Cardiac septum (tissue), 1 donor: ENCODE measurements at regions of chr15 and their contacts with region 1.

Region 1: GRCh38 chr15:31435261-31435911 is 108.8 kb downstream of the KLF13 start:
- DNase-seq: peak; percentile 91

Region 2: DNA sequence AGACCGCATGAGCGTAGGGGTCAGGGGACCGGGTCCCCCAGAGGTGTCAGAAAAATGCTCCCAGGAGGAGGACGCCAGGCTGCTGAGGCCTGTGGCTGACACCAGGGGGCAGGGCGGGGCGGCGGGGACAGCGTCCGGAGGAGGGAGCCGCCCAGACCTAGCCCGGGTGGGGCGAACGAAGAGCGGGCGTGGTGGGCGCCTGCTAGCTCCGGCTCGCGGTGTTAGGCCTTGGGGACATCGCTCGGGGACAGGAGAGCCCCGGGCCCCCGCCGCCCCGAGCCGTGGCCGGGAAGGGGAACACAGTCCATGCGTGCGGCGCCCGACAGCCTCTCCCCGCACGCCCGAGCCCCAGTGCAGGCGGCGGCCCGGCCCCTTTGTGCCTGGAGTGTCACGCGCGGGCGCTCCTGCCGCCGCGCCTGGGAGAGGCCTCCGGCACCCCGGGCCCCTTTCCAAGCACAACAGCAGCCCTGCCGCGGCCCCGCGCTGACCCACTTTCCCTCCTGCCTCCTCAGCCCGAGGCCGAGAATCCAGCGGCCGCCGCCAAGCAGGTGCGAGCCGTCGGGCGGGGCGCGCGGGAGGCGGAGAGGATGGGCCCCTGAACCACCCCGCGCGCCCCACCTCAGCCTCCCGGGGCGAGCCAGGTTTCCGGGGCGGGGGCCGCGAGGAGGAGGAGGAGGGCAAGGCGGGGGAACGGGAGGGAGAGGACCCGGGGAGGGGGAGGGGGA is 219.7 kb before region 1 on chr15:
- intact Hi-C with region 1: loop called (anchors 5 kb)
- DNase-seq: peak; percentile 95

Region 3: DNA sequence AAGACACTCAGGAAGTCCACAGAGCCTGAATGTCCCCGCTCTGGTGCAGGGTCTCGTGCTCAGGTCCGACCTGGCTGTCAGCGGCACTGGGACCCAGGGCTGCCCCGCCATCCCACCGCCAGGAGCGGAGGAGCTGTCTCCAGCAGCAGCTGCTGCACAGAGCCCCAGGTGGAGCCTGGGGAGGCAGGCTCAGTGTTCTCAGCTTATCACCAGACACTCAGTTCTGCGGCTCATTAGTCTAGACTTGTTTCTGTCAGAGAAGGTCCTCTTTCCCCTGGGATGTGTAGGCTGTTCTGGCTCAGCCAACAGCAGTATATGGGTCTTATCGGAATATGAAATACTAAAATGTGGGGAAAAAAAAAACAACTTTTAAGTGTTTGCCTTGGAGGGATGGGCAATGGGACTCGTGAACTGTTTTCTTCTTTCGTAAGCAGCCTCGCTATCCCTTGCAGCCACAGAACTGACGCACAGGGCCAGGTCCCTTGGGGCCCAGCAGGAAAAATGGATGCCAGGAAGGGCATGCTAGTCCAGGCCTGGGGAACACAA is 32.8 kb before region 1 on chr15:
- intact Hi-C with region 1: loop called (anchors 2 kb)
- DNase-seq: no peak